ENCODE measurements at regions of chr19 and their contacts with region 1.

Region 1: GRCh38 chr19:32373585-32374295 is 28.3 kb downstream of the ZNF507 start:
- DNase-seq: peak; percentile 100
- ATAC-seq: peak; percentile 98
- H3K4me3 ChIP-seq: peak overlapping the region; percentile 2 to 48; a peak in 3 of 4 replicates
- H3K27ac ChIP-seq: peak overlapping the region; percentile 95
- H3K4me1 ChIP-seq: peaks cover 35% of the 10 kb centered on the region
- H3K27me3 ChIP-seq: no peaks in the 10 kb centered on the region
- CTCF ChIP-seq: no peak

Region 2: GRCh38 chr19:30817965-30818567 is 1555.7 kb before region 1 on chr19:
- CTCF ChIA-PET with region 1: no interaction called
- POLR2A ChIA-PET with region 1: interaction called, 17 read pairs
- in situ Hi-C with region 1: no loop called
- intact Hi-C with region 1: no loop called
- DNase-seq: no peak
- ATAC-seq: no peak
- H3K4me3 ChIP-seq: no peak overlapping the region
- H3K27ac ChIP-seq: no peak overlapping the region
- H3K4me1 ChIP-seq: no peaks in the 10 kb centered on the region
- H3K27me3 ChIP-seq: peaks cover 6% of the 10 kb centered on the region; the same call in 1 of the 2 replicates
- CTCF ChIP-seq: no peak

Region 3: GRCh38 chr19:32053376-32053775 is 320.4 kb before region 1 on chr19:
- CTCF ChIA-PET with region 1: no interaction called
- POLR2A ChIA-PET with region 1: no interaction called
- in situ Hi-C with region 1: no loop called
- intact Hi-C with region 1: no loop called
- DNase-seq: no peak
- ATAC-seq: no peak
- H3K4me3 ChIP-seq: no peak overlapping the region
- H3K27ac ChIP-seq: no peak overlapping the region
- H3K4me1 ChIP-seq: no peaks in the 10 kb centered on the region
- H3K27me3 ChIP-seq: peaks cover 14% of the 10 kb centered on the region
- CTCF ChIP-seq: no peak

Region 4: DNA sequence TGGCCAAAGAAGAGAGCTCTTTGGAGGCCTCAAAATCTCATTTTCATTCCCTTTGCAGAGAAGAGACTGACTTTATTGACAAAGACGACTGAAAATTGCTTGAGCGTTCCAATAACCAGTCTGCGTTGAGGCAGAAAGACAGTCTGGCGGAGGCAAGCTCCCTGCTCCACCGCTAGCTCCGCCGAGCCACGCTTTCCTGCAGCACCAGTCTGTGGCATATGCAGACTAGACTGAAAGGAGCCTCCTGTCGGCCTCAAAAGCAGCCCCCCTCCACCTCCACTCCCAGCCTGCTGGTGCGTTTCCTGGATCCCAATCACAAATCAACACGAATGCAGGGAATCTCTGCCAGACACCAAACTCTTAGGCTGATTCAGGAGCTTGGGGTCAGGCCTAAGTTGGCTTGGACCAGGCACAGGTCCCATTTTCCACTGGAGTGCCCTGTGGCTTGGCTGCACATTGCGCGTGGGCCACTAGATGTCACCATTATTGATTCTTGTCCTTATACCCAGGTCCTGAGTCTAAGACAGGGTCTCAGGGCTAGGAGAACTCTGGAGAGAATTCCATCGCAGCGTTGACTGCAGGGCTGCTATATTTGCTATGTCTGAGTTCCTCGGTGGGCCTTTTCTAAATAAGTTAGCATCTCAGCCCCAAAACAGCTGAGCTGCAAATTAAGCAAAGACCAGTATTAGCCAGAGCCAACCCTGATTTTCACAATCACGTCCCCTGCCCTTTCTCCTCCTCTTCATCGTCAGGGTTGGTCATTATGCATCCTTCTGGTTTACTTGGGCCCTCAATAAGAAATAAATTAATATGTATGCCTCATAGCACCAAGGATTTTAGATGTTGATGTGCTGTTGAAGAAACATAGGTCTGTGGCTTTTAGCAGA is 33.5 kb before region 1 on chr19:
- CTCF ChIA-PET with region 1: no interaction called
- POLR2A ChIA-PET with region 1: no interaction called
- in situ Hi-C with region 1: no loop called
- intact Hi-C with region 1: no loop called
- DNase-seq: peak; percentile 53
- ATAC-seq: peak; percentile 91
- H3K4me3 ChIP-seq: no peak overlapping the region
- H3K27ac ChIP-seq: peak overlapping the region; percentile 32; the same call in 1 of the 2 replicates
- H3K4me1 ChIP-seq: peaks cover 12% of the 10 kb centered on the region
- H3K27me3 ChIP-seq: no peaks in the 10 kb centered on the region
- CTCF ChIP-seq: peak; percentile 92

Region 5: DNA sequence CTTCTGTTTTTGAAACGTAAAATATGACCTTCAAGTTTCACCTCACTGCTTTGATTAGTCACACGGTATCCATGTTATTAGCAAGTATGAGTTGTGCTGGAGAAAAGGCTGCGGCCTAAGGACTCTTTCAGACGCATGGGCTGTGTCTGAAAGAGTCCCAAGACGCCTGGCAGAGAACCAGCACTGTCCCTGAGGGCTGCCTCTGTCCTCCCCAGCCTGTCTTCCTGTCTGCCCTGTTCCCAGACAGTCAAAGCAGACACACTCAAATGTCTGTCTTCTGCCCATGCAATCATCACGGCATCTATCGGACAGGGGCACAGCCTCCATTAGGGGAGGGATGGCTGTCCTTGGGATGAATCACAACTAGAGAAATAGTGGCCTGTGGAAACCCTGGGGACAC is 97.4 kb after region 1 on chr19:
- CTCF ChIA-PET with region 1: no interaction called
- POLR2A ChIA-PET with region 1: no interaction called
- in situ Hi-C with region 1: no loop called
- intact Hi-C with region 1: no loop called
- DNase-seq: no peak
- ATAC-seq: no peak
- H3K4me3 ChIP-seq: no peak overlapping the region
- H3K27ac ChIP-seq: no peak overlapping the region
- H3K4me1 ChIP-seq: no peaks in the 10 kb centered on the region
- H3K27me3 ChIP-seq: no peaks in the 10 kb centered on the region
- CTCF ChIP-seq: no peak

Region 6: DNA sequence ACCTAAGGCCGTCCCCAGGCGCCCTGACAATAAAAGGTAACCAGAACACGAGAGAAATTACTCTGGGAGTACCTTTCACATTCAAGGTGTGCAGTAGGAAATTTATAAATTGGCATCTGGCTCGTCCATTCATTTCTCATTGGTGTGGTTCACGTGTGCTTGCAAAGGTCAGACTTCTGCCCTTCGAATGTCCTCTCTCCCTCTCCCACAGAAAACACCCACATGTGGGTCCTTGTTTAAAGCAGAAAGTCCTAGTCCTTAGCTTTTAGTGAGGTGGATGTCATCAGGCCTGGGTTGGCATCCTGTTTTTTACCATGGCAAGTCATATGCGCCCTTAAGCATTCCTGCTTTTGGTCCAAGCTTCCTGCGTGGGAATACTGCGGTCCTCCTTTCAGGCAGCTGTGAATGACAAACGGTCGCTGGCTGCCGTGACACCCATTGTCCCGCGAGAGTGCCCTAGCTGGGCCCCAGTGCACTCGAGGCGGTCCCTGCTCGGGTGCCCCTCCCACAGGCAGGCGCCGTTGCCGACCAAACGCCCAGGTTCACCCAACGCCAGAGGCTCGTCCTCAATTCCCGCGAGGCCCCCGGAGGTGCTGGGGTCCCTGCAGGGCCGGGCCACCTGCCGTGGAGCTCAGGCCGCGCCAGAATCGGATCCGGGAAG is 317.7 kb after region 1 on chr19 and contains the start of gene NUDT19:
- CTCF ChIA-PET with region 1: no interaction called
- POLR2A ChIA-PET with region 1: no interaction called
- in situ Hi-C with region 1: no loop called
- intact Hi-C with region 1: no loop called
- DNase-seq: peak; percentile 61
- ATAC-seq: peak; percentile 96
- H3K4me3 ChIP-seq: peak within 1 kb of the TSS; percentile 78 to 83
- H3K27ac ChIP-seq: peak within 1 kb of the TSS; percentile 96
- H3K4me1 ChIP-seq: peaks cover 13% of the 10 kb centered on the region
- H3K27me3 ChIP-seq: no peaks in the 10 kb centered on the region
- CTCF ChIP-seq: no peak
- total RNA-seq, gene NUDT19: 41.4 TPM